PC-3 (cell line): ENCODE measurements at regions of chr1 and their contacts with region 1.

Region 1: GRCh38 chr1:15603050-15603965 is 13.9 kb upstream of the DDI2 start:
- DNase-seq: peak; percentile 96
- ATAC-seq: peak; percentile 91
- H3K4me3 ChIP-seq: peak overlapping the region; percentile 90
- H3K27ac ChIP-seq: peak overlapping the region; percentile 50
- H3K4me1 ChIP-seq: peaks cover 17% of the 10 kb centered on the region
- H3K27me3 ChIP-seq: no peaks in the 10 kb centered on the region
- CTCF ChIP-seq: no peak

Region 2: GRCh38 chr1:15640667-15641066 is 37.4 kb after region 1 on chr1:
- CTCF ChIA-PET with region 1: no interaction called
- POLR2A ChIA-PET with region 1: no interaction called
- intact Hi-C with region 1: no loop called
- DNase-seq: no peak
- ATAC-seq: peak; percentile 50
- H3K4me3 ChIP-seq: no peak overlapping the region
- H3K27ac ChIP-seq: no peak overlapping the region
- H3K4me1 ChIP-seq: no peaks in the 10 kb centered on the region
- H3K27me3 ChIP-seq: no peaks in the 10 kb centered on the region
- CTCF ChIP-seq: no peak

Region 3: DNA sequence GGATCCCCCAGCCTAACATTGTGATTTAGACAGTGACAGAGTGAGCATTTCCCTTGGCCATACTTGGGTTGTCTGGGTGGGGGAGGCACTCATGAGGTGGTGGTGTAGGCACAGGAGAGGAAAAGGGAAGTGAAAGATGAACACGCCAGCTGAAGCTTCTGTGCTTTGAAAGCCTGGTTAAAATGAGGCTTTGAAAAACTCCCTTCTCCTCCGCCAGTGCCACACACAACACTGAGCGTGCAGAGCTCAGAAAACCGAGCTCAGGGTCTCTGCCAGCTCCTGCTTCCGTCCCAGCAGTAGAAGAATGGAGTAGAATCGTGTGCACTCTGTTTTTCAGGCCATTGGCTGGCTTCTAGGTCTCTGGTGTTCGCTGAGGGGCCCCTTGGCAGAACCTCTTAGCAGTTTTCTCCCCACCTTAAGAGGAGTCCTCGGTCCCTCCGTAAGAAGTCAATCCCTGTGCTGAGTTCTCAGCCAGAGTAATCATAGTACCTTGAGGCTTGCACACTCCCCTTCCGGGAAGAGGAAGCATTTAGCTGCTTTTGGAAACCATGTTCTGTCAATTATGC is 93.7 kb after region 1 on chr1:
- CTCF ChIA-PET with region 1: no interaction called
- POLR2A ChIA-PET with region 1: no interaction called
- intact Hi-C with region 1: no loop called
- DNase-seq: no peak
- ATAC-seq: no peak
- H3K4me3 ChIP-seq: no peak overlapping the region
- H3K27ac ChIP-seq: no peak overlapping the region
- H3K4me1 ChIP-seq: no peaks in the 10 kb centered on the region
- H3K27me3 ChIP-seq: no peaks in the 10 kb centered on the region
- CTCF ChIP-seq: no peak

Region 4: DNA sequence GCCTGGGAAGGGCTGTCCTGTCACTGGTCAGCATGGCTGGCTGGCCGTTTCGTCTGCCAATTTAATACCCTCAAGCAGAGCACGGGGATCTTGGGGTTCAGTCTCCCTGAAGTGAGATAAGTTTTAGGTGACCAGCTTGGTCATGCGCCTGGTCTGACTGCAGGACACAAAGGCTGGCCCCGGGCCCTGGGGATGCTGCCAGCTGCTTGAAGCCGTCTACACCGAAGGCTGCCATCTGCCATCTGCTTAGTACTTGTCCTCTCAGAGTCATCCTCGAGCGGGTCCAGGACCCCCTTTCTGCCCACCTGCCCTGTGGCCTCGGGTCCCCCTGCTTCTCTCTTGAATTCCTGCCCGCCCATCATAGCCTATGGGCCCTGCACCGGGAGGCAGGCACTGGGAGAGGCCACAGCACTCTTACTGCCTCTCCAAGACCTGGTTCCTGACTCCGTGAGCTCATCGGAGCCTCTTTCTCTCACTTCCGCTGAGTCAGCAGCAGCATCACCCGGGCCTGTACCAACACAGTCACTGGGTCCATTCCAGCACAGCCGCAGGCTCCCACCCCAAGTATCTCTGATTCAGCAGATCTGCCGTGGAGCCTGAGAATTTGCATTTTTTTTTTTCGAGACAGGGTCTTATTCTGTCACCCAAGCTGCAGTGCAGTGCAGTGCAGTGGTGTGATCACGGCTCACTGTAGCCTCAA is 162.3 kb after region 1 on chr1:
- CTCF ChIA-PET with region 1: no interaction called
- POLR2A ChIA-PET with region 1: interaction called, 13 read pairs
- intact Hi-C with region 1: no loop called
- DNase-seq: peak; percentile 95
- ATAC-seq: peak; percentile 98
- H3K4me3 ChIP-seq: no peak overlapping the region
- H3K27ac ChIP-seq: peak overlapping the region; percentile 81
- H3K4me1 ChIP-seq: peaks cover 29% of the 10 kb centered on the region
- H3K27me3 ChIP-seq: no peaks in the 10 kb centered on the region
- CTCF ChIP-seq: no peak

Region 5: DNA sequence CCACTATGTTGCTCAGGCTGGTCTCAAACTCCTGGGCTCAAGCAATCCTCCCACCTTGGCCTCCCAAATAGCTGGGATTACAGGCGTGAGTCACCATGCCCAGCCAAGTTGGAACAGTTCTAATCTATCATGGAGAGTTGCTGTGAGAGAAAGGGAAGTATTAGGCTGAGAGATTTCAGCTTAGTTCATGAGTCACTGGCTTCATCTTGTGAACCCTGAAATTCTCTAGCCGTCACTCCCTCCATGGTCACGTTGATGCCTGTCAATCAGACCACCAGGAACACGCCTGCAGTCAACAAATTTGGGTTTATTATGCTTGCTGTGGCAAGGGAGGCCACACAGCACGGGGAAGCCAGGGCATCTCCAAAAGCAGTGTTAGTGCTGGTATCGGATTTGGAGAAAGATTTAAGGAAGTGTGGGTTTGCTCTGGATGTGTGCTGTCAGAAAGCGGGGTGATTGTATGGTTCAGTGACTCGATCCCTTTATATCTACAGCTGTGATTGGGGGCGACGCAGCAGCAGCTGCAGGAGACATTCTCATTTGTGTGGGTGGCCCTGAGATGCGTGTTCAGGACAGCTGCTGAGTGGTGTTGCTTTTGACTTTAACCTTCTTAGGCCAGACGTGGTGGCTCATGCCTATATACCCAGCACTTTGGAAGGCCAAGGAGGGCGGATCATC is 185.5 kb after region 1 on chr1:
- CTCF ChIA-PET with region 1: no interaction called
- POLR2A ChIA-PET with region 1: no interaction called
- intact Hi-C with region 1: no loop called
- DNase-seq: peak; percentile 46
- ATAC-seq: no peak
- H3K4me3 ChIP-seq: no peak overlapping the region
- H3K27ac ChIP-seq: peak overlapping the region; percentile 49; the same call in 1 of the 2 replicates
- H3K4me1 ChIP-seq: peaks cover 30% of the 10 kb centered on the region
- H3K27me3 ChIP-seq: no peaks in the 10 kb centered on the region
- CTCF ChIP-seq: no peak